ENCODE measurements at regions of chrX and their contacts with region 1.

Region 1: DNA sequence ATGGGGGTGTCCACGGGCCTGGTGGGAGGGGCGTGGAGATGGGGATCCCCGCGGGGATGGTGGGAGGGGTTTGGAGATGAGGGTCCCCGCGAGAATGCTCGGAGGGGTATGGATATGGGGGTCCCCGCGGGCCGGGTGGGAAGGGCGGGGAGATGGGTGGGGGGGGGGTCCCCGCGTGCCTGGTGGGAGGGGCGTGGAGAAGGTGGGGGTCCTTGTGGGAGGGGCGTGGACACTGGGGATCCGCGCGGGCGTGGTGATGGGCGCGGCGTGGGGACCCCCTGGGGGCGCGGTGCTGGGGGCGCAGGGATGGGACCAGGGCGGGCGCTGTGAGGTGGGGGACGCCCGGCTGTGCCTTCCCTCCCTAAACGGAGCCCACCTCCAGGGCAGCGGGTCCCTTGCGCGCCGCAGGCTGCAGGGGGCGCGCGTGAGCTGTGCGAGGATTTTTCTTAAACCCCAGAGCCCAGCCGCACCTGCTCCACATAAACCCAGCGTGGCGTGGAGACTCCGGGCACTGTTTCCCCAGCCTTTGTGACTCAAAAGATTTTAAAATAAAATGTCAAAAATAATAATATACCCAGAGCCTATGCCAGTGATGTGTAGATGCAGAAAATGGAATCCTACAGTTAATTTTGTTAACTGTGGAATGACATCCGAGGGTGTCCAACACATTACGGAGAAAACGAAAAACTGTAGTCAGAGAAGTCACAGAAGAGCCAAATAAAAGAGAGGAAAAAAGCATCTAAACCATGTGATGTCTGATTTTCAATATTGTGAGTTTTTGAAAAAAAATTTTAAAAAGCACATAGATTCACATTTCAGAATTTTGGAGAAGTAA is 1.5 kb upstream of the ASMTL start:
- DNase-seq: peak; percentile 57 to 74
- ATAC-seq: peak; percentile 28 to 51
- H3K4me3 ChIP-seq: peak overlapping the region; percentile 49 to 96 (median 70)
- H3K27ac ChIP-seq: peak overlapping the region; percentile 61 to 98 (median 82)
- H3K4me1 ChIP-seq: peaks cover 10 to 15% of the 10 kb centered on the region in 2 donors
- H3K27me3 ChIP-seq: no peaks in the 10 kb centered on the region
- CTCF ChIP-seq: peak; percentile 89 to 97 (median 91)
- POLR2A ChIP-seq: no peak

Region 2: GRCh38 chrX:1580735-1581531 is 126.8 kb after region 1 on chrX:
- in situ Hi-C with region 1: loop called in 3 of 4 experiments (anchors 10 to 25 kb)
- intact Hi-C with region 1: loop called (anchors 1 kb)
- DNase-seq: no peak
- ATAC-seq: no peak
- H3K4me3 ChIP-seq: no peak overlapping the region
- H3K27ac ChIP-seq: no peak overlapping the region
- H3K4me1 ChIP-seq: no peaks in the 10 kb centered on the region
- H3K27me3 ChIP-seq: no peaks in the 10 kb centered on the region
- CTCF ChIP-seq: peak; percentile 34 to 70 (median 61)
- POLR2A ChIP-seq: no peak

Region 3: DNA sequence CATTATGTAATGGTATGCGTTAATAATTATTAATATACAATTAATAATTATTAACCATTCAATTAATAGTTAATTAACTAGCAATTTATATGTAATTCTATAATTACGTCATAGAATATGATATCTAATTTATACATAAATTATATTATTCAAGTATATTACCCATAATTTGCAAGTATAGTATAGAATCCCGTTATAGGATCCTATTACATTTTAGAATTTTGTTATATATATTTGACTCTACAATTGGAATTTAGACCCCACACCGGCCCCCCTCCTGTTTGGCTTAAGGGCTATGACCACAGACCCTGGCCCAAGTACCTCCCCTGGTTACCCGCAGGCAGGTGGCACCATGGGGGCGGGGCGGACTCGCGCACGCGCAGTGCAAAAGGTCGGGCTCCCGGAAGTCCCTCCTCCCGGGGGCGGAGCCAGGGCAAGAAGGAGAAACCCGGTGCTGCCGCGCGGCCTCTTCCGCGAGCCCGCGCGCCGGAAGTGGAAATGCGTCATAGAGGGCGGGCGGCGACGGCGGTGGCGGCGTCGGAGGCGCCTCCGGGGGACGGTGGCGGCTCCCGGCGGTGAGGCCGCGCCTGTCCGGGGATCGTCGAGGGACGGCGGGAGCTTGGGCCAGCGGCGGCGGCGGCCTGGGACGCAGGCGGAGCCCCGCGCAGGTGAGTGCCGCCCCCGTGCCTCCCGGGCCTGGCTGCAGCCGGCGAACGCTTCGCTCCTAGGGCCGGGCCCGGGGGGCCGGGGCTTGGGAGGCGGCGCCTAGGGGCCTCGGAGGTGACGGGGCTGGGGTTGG is 137.1 kb after region 1 on chrX and contains the start of gene AKAP17A:
- in situ Hi-C with region 1: loop called in 3 of 4 experiments (anchors 10 to 25 kb)
- intact Hi-C with region 1: no loop called
- DNase-seq: peak; percentile 91 to 95
- ATAC-seq: peak; percentile 95 to 99
- H3K4me3 ChIP-seq: peak within 1 kb of the TSS; percentile 77 to 99 (median 91)
- H3K27ac ChIP-seq: peak within 1 kb of the TSS; percentile 74 to 88 (median 80)
- H3K4me1 ChIP-seq: peaks cover 6 to 14% of the 10 kb centered on the region in 2 donors
- H3K27me3 ChIP-seq: no peaks in the 10 kb centered on the region
- CTCF ChIP-seq: peak in 1 of 5 experiments; percentile 21
- POLR2A ChIP-seq: peak; percentile 80 to 84
- total RNA-seq, gene AKAP17A: 14.1 to 15.9 (median 14.5) TPM

Region 4: GRCh38 chrX:2608638-2609430 is 1154.7 kb after region 1 on chrX:
- in situ Hi-C with region 1: loop called (anchors 25 kb)
- intact Hi-C with region 1: loop called (anchors 1 kb)
- DNase-seq: peak; percentile 69 to 78
- ATAC-seq: peak; percentile 85 to 91
- H3K4me3 ChIP-seq: peak overlapping the region; percentile 70 to 97 (median 77)
- H3K27ac ChIP-seq: peak overlapping the region; percentile 74 to 84 (median 80)
- H3K4me1 ChIP-seq: peaks cover 5 to 7% of the 10 kb centered on the region in 2 donors
- H3K27me3 ChIP-seq: no peaks in the 10 kb centered on the region
- CTCF ChIP-seq: no peak
- POLR2A ChIP-seq: peak; percentile 28 to 34

Region 5: DNA sequence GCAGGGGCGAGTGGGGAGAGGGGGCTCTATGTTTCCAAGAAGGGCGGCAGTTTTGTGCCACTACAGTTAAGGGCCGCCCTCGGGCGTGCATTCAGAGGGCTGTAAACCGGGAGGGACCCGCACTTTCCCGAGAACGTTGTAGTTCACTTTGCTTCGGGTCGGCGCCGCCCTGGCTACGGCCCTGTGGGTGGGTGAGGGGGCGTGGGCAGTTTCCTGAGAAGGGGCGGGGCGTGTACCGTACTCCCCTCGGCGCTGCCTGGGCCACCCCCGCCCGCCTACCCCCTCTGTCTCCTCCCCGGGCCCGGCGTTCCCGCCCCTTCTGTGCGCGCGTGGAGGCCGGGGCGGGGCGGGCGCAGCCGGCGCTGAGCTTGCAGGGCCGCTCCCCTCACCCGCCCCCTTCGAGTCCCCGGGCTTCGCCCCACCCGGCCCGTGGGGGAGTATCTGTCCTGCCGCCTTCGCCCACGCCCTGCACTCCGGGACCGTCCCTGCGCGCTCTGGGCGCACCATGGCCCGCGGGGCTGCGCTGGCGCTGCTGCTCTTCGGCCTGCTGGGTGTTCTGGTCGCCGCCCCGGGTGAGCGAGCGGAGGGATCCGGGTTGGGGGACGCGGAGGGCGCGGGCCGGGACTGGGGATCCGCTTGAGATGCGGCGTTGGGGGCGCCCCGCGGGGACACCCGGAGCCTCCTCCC is 1236.8 kb after region 1 on chrX and contains the start of gene CD99:
- in situ Hi-C with region 1: no loop called
- intact Hi-C with region 1: loop called (anchors 5 kb)
- DNase-seq: peak; percentile 84 to 85
- ATAC-seq: peak; percentile 77 to 82
- H3K4me3 ChIP-seq: peak within 1 kb of the TSS; percentile 70 to 88 (median 81)
- H3K27ac ChIP-seq: peak within 1 kb of the TSS; percentile 75 to 95 (median 84)
- H3K4me1 ChIP-seq: peaks cover 34 to 35% of the 10 kb centered on the region in 2 donors
- H3K27me3 ChIP-seq: no peaks in the 10 kb centered on the region
- CTCF ChIP-seq: no peak
- POLR2A ChIP-seq: peak; percentile 62 to 77
- total RNA-seq, gene CD99: 110 to 207 (median 133) TPM

Measured in gastrocnemius medialis (tissue), 4 donors.